ENCODE measurements at regions of chr10 and their contacts with region 1.

Region 1: DNA sequence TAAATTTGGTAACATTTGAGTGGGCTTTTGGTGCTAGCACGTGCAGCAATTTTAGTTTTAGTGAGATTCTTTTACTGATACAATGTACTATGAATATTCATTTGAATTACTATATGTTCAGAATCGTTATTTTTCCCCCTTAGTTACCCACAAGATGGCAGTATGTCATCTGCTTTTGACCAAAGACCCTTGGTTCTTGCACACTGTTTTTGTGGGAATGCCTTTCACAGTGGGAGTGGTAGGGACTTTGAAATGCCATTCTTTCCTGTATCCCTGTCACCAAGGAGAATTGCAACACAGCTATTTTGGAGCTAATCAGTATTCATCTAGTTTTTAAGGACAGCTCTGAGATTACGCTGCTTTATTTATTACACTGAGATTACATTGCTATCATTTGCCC is 40.6 kb downstream of the SEC23IP start:
- DNase-seq: no peak
- ATAC-seq: no peak
- H3K4me3 ChIP-seq: no peak overlapping the region
- H3K27ac ChIP-seq: no peak overlapping the region
- H3K4me1 ChIP-seq: no peaks in the 10 kb centered on the region
- H3K27me3 ChIP-seq: no peaks in the 10 kb centered on the region
- CTCF ChIP-seq: peak; percentile 12 to 39 (median 13); a peak in 2 of 6 replicates
- EP300 ChIP-seq: no peak
- POLR2A ChIP-seq: no peak
- RAD21 ChIP-seq: 0 out of 2 replicates have a peak, but pooled peaks have one; percentile 27

Region 2: DNA sequence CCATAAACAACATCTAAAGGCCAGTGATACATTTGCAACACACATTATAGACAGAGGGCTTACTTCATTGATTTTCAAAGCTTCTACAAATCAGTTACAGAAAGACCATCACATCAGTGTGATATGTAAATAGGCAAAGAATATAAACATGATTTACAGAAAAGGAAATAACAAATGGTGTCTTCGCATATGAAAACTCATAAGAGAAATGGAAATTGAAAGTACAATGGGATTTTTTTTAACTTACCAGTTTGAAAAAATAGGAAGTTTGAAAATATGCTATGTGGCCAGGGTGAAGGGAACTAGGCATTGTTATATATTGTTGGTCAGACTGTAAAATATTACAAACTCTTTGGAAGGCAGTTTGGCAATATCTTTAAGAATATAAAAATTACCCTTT is 13.4 kb before region 1 on chr10:
- CTCF ChIA-PET with region 1: interaction called, 7 read pairs
- POLR2A ChIA-PET with region 1: no interaction called
- RAD21 ChIA-PET with region 1: no interaction called
- SMC1A ChIA-PET with region 1: interaction called, 10 read pairs
- in situ Hi-C with region 1: no loop called
- intact Hi-C with region 1: no loop called
- DNase-seq: peak; percentile 13
- ATAC-seq: peak; percentile 86
- H3K4me3 ChIP-seq: 0 out of 2 replicates have a peak overlapping the region, but pooled peaks have one; percentile 10
- H3K27ac ChIP-seq: peak overlapping the region; percentile 75
- H3K4me1 ChIP-seq: peaks cover 8% of the 10 kb centered on the region
- H3K27me3 ChIP-seq: no peaks in the 10 kb centered on the region
- CTCF ChIP-seq: no peak
- EP300 ChIP-seq: no peak
- POLR2A ChIP-seq: no peak
- RAD21 ChIP-seq: no peak

Region 3: DNA sequence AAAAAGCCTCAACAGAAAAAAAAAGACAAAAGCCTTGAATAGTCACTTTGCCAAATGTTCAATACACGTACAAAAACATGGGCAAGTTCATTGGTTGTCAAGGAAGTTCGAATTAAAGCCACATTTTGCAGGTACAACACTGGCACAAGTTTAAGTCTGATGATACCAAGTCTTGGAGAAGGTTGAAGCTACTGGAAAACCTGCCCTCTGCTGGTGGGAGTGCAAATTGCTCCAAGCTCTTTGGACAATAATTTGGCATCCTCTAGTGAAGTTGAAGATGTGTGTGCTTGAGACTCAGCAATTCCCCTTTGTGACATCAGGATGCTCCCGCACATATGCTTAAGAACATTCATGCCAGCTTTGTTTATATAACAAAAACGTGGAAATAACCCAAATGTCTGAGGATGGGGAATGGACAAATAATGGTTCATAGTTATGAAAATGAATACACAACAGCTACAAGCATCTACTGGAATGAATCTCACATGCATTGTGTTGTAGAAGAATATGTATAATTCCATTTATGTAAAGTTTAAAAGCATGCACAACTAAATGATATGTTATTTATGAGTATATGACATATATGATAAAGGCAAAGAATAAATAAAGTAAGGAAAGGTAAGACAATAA is 403.8 kb after region 1 on chr10:
- CTCF ChIA-PET with region 1: no interaction called
- POLR2A ChIA-PET with region 1: no interaction called
- RAD21 ChIA-PET with region 1: no interaction called
- SMC1A ChIA-PET with region 1: interaction called, 4 read pairs
- in situ Hi-C with region 1: no loop called
- intact Hi-C with region 1: loop called (anchors 1 kb)
- DNase-seq: no peak
- ATAC-seq: peak; percentile 75
- H3K4me3 ChIP-seq: no peak overlapping the region
- H3K27ac ChIP-seq: no peak overlapping the region
- H3K4me1 ChIP-seq: no peaks in the 10 kb centered on the region
- H3K27me3 ChIP-seq: no peaks in the 10 kb centered on the region
- CTCF ChIP-seq: peak; percentile 77 to 81 (median 78)
- EP300 ChIP-seq: no peak
- POLR2A ChIP-seq: no peak
- RAD21 ChIP-seq: peak; percentile 51

Measured in GM12878 (cell line).